ENCODE measurements at regions of chr4 and their contacts with region 1.

Region 1: GRCh38 chr4:128574706-128575105 is 234.8 kb upstream of the JADE1 start:
- DNase-seq: peak; percentile 94
- ATAC-seq: peak; percentile 92
- H3K4me3 Mint-ChIP-seq: no peak overlapping the region
- H3K27ac Mint-ChIP-seq: no peak overlapping the region
- H3K4me1 Mint-ChIP-seq: peaks cover 47% of the 10 kb centered on the region
- H3K27me3 Mint-ChIP-seq: no peaks in the 10 kb centered on the region
- CTCF ChIP-seq: peak; percentile 83

Region 2: DNA sequence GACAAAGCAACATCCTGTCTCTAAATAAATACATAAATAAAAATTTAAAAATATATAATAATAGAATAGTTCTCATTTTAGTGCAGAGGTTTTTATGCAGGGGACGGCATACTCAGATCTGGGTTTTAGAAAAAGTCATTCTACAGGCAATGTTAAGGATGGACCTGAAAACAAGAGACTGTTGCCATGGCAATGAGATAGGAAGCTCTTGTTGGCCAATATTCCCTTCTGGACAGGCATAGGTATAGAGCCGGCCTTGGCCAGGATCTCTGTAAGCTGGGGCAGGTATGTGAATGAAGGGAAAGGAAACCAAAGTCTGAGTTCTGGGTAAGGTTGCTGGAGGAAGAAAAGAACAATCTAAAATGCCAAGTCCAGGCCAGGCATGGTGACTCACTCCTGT is 47.4 kb after region 1 on chr4:
- CTCF ChIA-PET with region 1: no interaction called
- POLR2A ChIA-PET with region 1: no interaction called
- DNase-seq: no peak
- ATAC-seq: no peak
- H3K4me3 Mint-ChIP-seq: no peak overlapping the region
- H3K27ac Mint-ChIP-seq: no peak overlapping the region
- H3K4me1 Mint-ChIP-seq: no peaks in the 10 kb centered on the region
- H3K27me3 Mint-ChIP-seq: no peaks in the 10 kb centered on the region
- CTCF ChIP-seq: no peak

Region 3: DNA sequence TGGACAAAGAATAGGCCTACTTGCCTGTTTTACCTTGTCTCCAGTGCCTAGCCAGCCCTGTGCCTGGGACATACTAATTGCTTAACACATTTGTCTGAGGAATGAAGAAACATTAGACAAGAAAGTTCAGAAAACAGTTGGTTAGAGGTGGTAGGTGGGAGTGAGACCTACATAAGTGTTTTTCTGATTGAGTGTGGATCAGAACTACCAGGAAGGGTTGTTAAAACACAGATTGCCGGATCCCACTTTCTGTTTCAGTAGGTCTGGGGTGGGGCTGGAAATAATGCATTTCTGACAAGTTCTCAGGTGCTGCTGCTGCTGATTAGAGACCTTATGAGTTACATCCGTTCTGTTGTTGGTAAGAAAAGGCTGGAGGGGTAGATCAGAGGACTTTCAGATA is 229.1 kb after region 1 on chr4:
- CTCF ChIA-PET with region 1: interaction called, 10 read pairs
- POLR2A ChIA-PET with region 1: interaction called, 4 read pairs
- DNase-seq: no peak
- ATAC-seq: no peak
- H3K4me3 Mint-ChIP-seq: peak overlapping the region; percentile 8; the same call in 1 of the 2 replicates
- H3K27ac Mint-ChIP-seq: no peak overlapping the region
- H3K4me1 Mint-ChIP-seq: peaks cover 22% of the 10 kb centered on the region
- H3K27me3 Mint-ChIP-seq: no peaks in the 10 kb centered on the region
- CTCF ChIP-seq: no peak

Region 4: DNA sequence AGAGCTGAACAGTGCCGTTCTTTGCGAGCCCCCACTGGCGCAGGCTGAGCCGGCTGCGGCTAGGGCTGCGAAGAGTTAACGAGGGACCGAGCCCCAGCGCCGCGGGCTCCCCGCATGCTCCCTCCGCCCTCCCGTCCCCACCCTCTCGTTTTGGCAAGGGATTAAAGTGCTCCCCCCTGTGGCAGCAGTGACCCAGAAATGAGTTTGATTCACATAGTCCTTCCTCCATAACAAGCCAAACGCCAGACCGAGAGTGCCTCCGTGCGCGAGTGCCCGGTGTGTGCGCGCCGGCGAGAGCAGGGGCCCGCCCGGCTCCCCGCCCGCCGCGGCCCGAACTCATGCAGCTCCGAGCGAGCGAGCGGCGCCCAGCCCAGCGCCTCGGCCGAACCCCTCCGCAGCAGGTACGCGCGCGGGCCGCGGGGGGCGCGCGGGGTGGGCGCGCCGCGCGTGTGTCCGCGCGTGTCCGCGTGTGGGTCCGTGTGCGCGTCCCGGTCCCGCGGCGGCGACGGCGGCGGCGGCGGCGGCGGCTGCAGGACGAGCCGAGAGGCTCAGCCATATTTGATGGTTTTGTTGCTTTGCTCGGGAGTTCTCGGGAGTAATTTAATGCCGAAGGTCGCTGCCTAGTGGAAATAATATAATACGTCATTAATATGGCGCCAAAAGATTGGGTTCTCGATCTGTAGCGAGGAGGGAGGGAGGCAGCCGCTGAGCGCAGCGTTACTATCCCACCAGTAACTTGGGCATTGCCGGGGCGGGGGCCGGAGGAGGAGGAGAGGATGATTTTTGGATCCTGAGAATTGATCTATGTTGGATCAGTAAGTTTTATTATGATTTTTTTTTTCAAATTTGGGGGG is 235.0 kb after region 1 on chr4 and contains the start of gene JADE1:
- CTCF ChIA-PET with region 1: interaction called, 10 read pairs
- POLR2A ChIA-PET with region 1: interaction called, 9 read pairs
- DNase-seq: peak; percentile 95
- ATAC-seq: peak; percentile 65
- H3K4me3 Mint-ChIP-seq: peak within 1 kb of the TSS; percentile 98
- H3K27ac Mint-ChIP-seq: peak within 1 kb of the TSS; percentile 100
- H3K4me1 Mint-ChIP-seq: peaks cover 42% of the 10 kb centered on the region
- H3K27me3 Mint-ChIP-seq: no peaks in the 10 kb centered on the region
- CTCF ChIP-seq: peak; percentile 23; the same call in 1 of the 2 replicates
- total RNA-seq, gene JADE1: 132 to 156 TPM (median 150 TPM) in 3 replicates

Region 5: DNA sequence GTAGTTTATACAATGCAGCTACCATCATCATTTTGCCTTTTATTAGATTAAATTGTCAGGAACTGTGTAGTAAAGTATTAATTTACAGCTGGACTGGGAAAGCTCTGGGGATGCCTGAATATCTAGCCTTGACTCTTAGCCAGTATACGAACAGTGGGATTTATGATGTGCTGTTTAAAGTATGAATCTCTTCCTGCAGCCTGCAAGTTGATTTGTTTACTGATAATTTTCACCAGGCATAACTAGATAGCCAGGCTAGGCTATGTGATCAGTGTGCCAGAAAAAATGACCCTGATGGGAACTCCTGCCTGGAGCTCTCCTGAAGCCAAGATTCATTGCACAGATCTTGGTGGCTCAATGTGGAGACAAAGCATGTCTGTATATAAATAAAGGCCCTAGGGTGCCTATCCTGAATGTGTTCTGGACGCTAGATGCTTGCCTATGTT is 399.5 kb after region 1 on chr4:
- CTCF ChIA-PET with region 1: no interaction called
- POLR2A ChIA-PET with region 1: no interaction called
- DNase-seq: no peak
- ATAC-seq: no peak
- H3K4me3 Mint-ChIP-seq: no peak overlapping the region
- H3K27ac Mint-ChIP-seq: peak overlapping the region; percentile 63; the same call in 1 of the 2 replicates
- H3K4me1 Mint-ChIP-seq: no peaks in the 10 kb centered on the region
- H3K27me3 Mint-ChIP-seq: no peaks in the 10 kb centered on the region
- CTCF ChIP-seq: no peak